Right ventricle myocardium inferior (tissue), 1 donor: ENCODE measurements at regions of chr20 and their contacts with region 1.

Region 1: DNA sequence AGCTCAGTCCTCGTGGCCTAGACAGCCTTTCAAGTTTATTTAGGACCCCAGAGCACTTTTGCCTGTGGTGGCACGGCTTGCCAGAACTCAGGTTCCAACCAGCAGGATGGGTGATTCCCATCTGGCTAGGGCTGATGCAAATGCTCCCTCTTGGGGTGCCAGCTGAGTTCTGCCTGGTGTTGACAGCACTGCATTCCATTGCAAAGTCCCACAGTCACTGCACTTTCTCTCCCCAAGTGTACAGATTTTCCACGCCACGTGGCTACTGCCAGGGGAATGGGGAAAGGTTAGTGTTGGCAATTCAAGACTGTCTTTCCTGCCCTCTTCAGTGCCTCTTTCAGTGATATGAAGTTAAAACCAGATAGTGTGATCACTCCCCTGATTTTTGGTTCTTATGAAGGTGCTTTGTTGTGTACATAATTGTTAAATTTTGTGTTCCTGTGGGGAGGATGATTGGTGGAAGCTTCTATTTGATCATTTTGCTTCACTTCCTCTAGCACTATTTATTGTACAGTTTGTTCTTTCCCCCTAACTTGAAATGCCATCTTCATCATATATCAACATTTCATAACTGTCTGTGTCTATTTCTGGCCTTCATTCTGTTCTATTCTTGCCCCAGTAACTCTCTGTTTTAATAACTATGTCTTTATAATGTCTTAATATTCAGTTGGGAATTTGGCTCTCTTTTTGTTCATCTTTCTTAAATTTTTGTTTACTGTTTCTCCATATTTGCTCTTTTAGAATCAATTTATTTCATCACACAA is 86.2 kb downstream of the CFAP61 start:
- DNase-seq: no peak
- ATAC-seq: peak; percentile 90

Region 2: DNA sequence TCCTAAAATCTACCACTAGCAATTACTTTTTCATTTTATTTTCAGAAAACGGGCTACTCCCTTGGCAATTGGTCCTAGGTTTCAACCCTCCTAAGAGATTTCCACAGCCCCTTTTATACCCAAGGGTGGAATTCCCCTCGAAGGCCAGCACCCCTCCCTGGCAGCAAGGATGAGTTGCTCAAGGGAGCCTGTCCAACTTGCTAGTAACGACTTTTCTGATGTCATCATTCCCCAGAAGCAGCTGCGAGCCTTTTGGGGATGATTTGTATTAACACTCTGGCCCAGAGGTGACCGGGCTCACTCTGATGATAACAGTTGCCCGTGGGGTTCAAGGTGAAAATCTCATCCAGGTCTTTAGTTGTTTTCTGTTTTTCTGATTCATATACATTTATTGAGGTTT is 152.1 kb before region 1 on chr20:
- intact Hi-C with region 1: no loop called
- DNase-seq: no peak
- ATAC-seq: peak; percentile 33

Region 3: GRCh38 chr20:20211274-20211987 is 72.9 kb after region 1 on chr20:
- intact Hi-C with region 1: loop called (anchors 5 kb)
- DNase-seq: no peak
- ATAC-seq: no peak